K562 (cell line): ENCODE measurements at regions of chr5 and their contacts with region 1.

Region 1: DNA sequence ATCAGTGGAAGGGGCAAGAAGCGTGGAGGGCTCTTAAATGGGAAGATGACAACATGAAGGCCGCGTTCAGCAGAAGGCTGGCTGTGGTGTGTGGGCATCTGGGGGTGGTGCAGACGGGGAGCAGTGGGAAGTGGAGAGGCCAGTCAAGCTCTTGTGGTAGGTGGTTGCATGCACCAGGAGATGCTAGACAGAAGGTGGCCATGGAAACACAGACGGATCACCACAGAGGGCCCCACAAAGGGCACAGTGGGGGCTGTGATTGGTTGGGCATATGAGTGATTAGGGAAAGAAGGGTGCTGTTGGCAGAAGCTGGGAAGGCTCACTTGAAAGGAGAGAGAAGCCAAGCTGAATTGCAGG is 14.7 kb downstream of the MTMR12 start:
- DNase-seq: peak in 1 of 4 experiments; percentile 15
- ATAC-seq: peak; percentile 60
- H3K4me3 ChIP-seq: peak overlapping the region; percentile 4; the same call in 1 of the 2 replicates
- H3K27ac ChIP-seq: peak overlapping the region; percentile 78
- H3K4me1 ChIP-seq: peaks cover 19 to 25% of the 10 kb centered on the region in 2 experiments
- H3K27me3 ChIP-seq: no peaks in the 10 kb centered on the region
- CTCF ChIP-seq: no peak
- EP300 ChIP-seq: no peak
- POLR2A ChIP-seq: no peak
- RAD21 ChIP-seq: no peak

Region 2: DNA sequence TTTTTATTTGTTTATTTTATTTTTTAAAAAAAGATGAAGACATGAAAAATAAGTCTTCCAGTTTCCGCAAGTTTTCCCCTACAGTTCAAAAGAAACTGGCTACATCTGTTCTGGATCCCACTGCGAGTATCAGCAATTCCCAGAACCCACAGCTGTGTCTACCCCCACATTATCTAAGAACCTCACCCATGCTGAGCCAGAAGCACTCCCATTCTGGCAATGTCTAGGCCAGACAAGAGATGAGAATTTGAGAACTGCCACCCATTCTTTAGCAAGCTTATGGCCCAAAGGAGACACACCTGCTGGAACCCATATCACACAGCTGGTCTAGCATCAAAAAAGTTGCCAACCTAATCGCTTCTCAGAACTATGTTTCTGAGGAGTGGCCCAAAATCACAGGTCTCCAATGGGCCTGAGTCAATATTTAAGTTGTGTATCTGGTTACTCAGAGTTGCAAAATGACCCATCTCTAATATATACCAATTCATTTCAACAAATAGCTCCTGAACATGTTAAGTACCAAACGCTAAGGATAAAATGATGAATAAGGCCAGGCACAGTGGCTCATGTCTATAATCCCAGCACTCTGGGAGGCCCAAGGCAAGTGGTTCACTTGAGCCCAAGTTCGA is 12.4 kb before region 1 on chr5:
- CTCF ChIA-PET with region 1: no interaction called
- POLR2A ChIA-PET with region 1: interaction called, 10 read pairs
- in situ Hi-C with region 1: no loop called
- intact Hi-C with region 1: no loop called
- DNase-seq: peak; percentile 70 to 83 (median 78)
- ATAC-seq: peak; percentile 74
- H3K4me3 ChIP-seq: no peak overlapping the region
- H3K27ac ChIP-seq: no peak overlapping the region
- H3K4me1 ChIP-seq: peaks cover 20 to 29% of the 10 kb centered on the region in 2 experiments; a peak in 4 of 5 replicates
- H3K27me3 ChIP-seq: no peaks in the 10 kb centered on the region
- CTCF ChIP-seq: no peak
- EP300 ChIP-seq: peak; percentile 81; the same call in 1 of the 2 replicates
- POLR2A ChIP-seq: no peak
- RAD21 ChIP-seq: no peak

Region 3: DNA sequence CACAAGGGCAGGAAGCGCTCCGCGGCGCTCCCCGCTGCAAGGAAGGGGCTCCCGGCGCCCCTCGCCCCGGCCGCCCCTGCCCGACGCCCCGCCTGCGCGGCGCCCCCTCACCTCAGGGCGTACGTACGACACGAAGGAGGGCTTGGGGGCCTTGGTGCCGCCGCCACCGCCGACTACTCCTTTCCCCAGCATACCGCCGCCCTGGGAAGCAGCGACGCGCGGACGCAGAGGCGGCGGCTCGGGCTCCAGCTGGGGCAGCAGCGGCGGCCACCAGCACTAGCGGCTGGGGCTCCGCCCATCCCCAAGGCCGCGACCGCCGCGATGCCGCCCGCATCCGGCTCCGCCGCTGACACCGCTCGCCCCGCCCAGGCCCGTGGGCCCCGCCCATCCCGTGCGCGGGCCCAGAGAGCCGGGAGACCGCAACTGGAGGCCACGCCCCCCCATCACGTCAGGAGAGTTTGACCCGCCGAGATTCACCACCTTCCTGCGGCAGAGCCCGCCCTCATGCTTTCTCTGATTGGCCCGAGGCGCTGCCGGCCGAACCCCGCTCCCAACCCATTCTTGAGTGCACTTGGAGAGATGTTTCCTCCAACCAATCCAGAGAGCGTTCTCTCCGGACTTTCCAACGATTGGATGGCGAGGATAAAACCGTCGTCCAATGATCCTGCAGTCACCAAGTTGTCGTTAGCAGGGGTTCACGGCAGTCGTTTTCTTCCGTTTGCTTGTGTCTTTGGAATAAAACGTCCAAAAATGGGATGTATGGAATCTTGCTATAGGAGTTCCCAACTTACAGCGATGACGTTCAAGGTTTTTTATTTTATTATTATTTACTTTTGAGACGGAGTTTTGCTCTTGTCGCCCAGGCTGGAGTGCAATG is 14.8 kb after region 1 on chr5 and contains the start of gene MTMR12:
- CTCF ChIA-PET with region 1: no interaction called
- POLR2A ChIA-PET with region 1: interaction called, 10 read pairs
- in situ Hi-C with region 1: no loop called
- intact Hi-C with region 1: no loop called
- DNase-seq: peak; percentile 99 to 100 (median 100)
- ATAC-seq: peak; percentile 97
- H3K4me3 ChIP-seq: peak within 1 kb of the TSS; percentile 94
- H3K27ac ChIP-seq: peak within 1 kb of the TSS; percentile 80
- H3K4me1 ChIP-seq: peaks cover 13 to 33% of the 10 kb centered on the region in 2 experiments
- H3K27me3 ChIP-seq: no peaks in the 10 kb centered on the region
- CTCF ChIP-seq: no peak
- EP300 ChIP-seq: no peak
- POLR2A ChIP-seq: peak; percentile 93
- RAD21 ChIP-seq: no peak
- polyA plus RNA-seq, gene MTMR12: 4.0 to 5.3 TPM